Stomach (tissue), 19 donors: ENCODE measurements at regions of chr6 and their contacts with region 1.

Region 1: DNA sequence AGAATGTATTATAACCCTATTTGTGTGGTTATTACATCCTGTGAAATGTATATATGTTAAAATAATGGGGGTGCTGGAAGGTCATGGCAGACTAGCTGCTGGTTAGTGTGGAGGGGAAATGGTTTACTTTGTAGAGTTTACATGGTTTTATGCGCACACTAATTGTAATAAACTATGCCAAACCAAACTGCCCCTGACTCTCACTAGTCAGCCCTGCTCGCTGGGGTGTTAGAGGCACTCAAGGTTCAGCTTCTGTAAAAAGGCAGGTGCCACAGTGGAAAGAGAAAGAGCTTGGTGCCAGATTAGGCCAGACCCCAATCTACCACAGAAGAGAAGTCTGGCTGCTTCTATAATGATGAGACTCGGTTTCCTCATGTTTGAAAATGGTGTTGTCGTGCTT is 52.7 kb downstream of the GOPC start:
- DNase-seq: peak in 1 of 2 donors; percentile 20
- H3K4me3 ChIP-seq: no peak overlapping the region
- H3K27ac ChIP-seq: peak overlapping the region in 2 of 5 donors; percentile 15 to 16
- H3K4me1 ChIP-seq: peaks cover 0 to 37% (median 8%) of the 10 kb centered on the region in 4 donors
- H3K27me3 ChIP-seq: no peaks in the 10 kb centered on the region
- CTCF ChIP-seq: no peak
- EP300 ChIP-seq: no peak
- POLR2A ChIP-seq: no peak

Region 2: DNA sequence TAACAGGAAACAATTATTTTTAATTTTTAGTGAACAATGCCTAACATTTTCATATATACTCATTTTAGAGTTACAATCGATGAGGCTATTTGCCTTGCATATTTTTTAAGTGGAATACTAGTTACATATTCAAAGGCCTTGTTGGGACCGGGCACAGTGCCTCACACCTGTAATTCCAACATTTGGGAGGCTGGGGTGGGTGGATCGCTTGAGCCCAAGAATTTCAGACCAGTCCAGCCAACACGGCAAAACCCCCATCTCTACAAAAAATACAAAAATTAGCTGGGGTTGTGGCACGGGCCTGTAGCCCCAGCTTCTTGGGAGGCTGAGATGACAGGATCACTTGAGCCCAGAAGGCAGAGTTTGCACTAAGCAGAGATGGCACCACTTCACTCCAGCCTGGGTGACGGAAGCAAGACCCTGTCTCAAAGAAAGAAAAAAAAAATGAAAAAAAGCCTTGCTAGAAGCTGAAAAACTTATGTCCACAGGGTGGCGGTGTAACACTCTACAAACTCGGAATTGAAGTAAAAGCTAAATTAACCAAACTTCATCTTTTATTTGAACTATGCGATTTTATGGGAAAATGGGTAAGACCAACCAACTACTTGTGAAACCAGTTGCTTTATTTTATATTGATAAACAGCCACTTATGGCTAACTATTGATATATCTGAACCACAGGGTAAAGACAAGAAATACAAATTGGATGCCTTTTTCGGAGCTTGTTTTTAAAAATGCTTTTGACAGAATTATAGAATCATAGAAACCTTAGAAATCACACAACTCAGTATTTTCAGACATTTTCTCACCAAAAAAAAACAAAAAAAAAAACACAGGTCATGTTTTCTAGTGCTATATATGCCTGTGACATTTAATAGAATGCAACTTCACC is 99.8 kb before region 1 on chr6:
- intact Hi-C with region 1: loop called (anchors 5 kb)
- DNase-seq: peak; percentile 58 to 90
- H3K4me3 ChIP-seq: no peak overlapping the region
- H3K27ac ChIP-seq: peak overlapping the region in 1 of 5 donors; percentile 23
- H3K4me1 ChIP-seq: peaks cover 12 to 32% (median 21%) of the 10 kb centered on the region in 4 donors
- H3K27me3 ChIP-seq: no peaks in the 10 kb centered on the region
- CTCF ChIP-seq: peak in 5 of 7 experiments; percentile 35 to 77 (median 74)
- EP300 ChIP-seq: no peak
- POLR2A ChIP-seq: no peak